Activated CD8-positive, alpha-beta memory T cell treated with anti-CD3 and anti-CD28 coated beads, Interleukin-2, amount 10 ng/mL, durations not matched to agents 7 days and 5 days (primary cell): ENCODE measurements at regions of chr9 and their contacts with region 1.

Region 1: DNA sequence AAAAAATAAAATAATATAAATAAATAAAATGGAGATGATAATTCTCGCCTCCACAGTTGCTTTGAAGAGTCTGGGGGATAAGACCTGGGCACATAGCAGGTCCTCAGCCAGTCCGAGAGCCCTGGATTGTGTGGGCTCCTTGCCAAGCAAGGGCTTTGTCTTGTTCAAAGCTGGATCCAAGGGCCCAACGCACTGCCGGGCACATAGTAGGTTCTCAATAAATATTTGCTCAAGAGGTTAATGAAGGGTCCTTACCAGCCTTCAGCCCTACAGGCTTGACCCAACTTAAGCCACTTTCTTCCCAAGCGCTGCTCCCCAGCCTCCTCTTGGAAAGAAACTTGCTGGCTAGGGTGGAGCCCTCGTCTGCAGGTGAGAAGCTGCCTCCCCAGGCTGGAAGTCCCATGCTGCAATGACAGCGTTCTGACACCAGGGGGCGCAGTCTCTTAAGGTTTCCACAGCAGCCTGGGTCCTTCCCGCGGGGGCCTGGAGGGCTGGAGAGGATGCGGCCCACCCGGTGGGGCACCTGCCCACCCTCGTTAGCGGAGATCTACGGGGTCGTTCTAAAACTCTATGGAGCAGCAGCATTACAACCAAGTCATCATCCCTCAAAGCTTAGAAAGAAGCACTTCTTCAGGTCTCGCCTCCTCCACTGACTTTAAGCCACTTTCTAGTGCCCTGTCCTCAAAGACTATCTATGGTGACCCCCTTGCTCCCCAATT is 115.2 kb downstream of the LHX2 start:
- DNase-seq: peak; percentile 84
- ATAC-seq: peak; percentile 83
- H3K4me3 Mint-ChIP-seq: no peak overlapping the region
- H3K27ac Mint-ChIP-seq: no peak overlapping the region
- H3K4me1 Mint-ChIP-seq: peaks cover 3% of the 10 kb centered on the region
- H3K27me3 Mint-ChIP-seq: peaks cover 10% of the 10 kb centered on the region

Region 2: GRCh38 chr9:124098141-124099090 is 28.3 kb before region 1 on chr9:
- CTCF ChIA-PET with region 1: no interaction called
- DNase-seq: no peak
- ATAC-seq: no peak
- H3K4me3 Mint-ChIP-seq: no peak overlapping the region
- H3K27ac Mint-ChIP-seq: no peak overlapping the region
- H3K4me1 Mint-ChIP-seq: peaks cover 7% of the 10 kb centered on the region
- H3K27me3 Mint-ChIP-seq: peaks cover 16% of the 10 kb centered on the region

Region 3: DNA sequence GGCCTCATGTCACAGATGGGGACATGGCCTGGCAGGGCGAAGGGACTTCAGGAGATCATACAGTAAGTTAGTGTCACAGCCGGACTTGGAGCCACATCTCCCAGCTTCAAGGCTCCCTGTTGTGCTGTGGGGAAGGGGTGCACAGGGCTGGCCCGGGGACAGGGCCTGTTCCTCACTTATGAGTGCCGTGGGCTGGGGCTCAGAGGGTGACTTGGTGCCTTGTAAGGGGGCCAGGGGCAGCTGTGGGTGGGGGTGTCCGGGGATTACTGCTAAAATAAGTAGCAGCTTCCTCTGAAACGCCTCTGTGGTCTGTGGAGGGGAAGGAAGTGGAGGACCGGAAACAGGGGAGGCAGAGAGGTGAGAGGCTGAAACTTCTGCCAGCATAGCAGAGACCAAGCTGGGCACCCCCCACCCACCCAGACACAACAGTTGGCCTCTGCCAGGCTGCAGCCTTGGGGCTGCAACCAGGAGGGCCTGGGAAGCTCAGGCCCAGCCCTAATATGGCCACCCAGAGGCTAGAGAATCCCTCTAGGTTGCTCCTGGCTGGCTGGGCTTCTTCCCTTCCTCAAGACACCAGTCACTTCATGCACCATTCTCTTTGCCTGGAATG is 89.9 kb after region 1 on chr9:
- CTCF ChIA-PET with region 1: interaction called, 10 read pairs
- DNase-seq: peak; percentile 87
- ATAC-seq: peak; percentile 70
- H3K4me3 Mint-ChIP-seq: peak overlapping the region; percentile 49
- H3K27ac Mint-ChIP-seq: peak overlapping the region; percentile 92
- H3K4me1 Mint-ChIP-seq: peaks cover 55% of the 10 kb centered on the region
- H3K27me3 Mint-ChIP-seq: peaks cover 13% of the 10 kb centered on the region

Region 4: DNA sequence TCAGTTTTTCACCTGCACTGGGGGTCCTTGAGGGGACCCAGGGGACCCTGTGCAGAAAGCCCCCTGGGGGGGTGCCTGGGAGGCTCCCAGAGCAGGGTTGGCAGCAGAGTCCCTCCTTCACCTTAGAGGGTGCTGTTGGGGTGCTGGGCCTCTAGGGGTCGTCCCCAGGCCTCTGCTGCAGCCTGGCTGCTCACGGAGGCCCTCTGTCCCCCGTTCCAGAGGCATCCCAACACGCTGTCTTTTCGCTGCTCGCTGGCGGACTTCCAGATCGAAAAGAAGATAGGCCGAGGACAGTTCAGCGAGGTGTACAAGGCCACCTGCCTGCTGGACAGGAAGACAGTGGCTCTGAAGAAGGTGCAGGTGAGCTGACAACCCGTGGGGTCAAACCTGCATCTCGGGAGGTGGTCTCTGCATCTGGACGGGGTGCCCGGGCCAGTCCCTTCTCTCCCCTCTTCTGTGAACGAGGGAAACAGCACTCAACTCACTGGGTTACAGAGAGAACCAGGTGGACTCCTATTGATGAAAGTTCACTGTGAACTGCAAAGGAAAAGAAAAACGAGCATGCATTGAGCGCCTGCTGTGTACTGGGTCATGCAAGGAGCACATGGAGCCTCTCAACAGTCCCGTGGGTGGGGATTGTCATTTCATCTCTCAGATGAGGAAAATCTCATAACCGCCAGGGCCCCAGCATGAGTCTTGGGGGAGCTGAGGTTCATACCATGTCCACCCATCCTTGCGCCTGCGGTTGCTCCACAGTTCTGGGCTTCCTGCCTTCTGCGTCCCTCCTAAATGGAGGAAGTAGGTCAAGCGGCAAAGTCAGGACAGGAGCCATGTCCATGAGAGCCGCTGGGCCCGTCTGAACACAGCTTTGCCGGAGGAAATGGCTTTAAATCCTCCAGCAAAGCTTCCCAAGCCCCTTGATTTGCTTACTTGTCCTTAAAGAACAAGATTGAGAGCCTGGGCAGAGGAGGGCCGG is 185.8 kb after region 1 on chr9:
- CTCF ChIA-PET with region 1: interaction called, 13 read pairs
- DNase-seq: no peak
- ATAC-seq: no peak
- H3K4me3 Mint-ChIP-seq: no peak overlapping the region
- H3K27ac Mint-ChIP-seq: no peak overlapping the region
- H3K4me1 Mint-ChIP-seq: no peaks in the 10 kb centered on the region
- H3K27me3 Mint-ChIP-seq: no peaks in the 10 kb centered on the region

Region 5: DNA sequence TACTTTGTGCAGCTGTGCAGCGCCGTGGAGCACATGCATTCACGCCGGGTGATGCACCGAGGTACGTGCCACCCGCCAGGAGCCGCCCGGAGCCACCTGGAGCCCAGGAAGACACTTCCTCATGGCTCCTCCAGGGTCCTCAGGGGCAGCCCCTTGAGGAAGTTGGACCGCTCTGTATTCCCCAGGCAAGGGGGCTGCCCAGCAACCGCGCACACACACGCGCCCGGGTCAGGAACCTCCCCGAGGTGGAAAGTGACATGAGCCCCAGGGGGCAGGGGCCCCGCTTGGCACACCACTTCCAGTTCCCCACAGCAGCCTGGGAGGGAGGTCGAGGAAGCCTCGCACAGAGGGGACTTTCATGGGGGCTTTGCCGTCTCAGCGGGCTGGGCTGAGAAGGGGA is 199.6 kb after region 1 on chr9:
- CTCF ChIA-PET with region 1: interaction called, 11 read pairs
- DNase-seq: no peak
- ATAC-seq: no peak
- H3K4me3 Mint-ChIP-seq: no peak overlapping the region
- H3K27ac Mint-ChIP-seq: no peak overlapping the region
- H3K4me1 Mint-ChIP-seq: peaks cover 3% of the 10 kb centered on the region
- H3K27me3 Mint-ChIP-seq: no peaks in the 10 kb centered on the region

Region 6: GRCh38 chr9:124392871-124393460 is 266.2 kb after region 1 on chr9:
- CTCF ChIA-PET with region 1: interaction called, 19 read pairs
- DNase-seq: no peak
- ATAC-seq: no peak
- H3K4me3 Mint-ChIP-seq: no peak overlapping the region
- H3K27ac Mint-ChIP-seq: no peak overlapping the region
- H3K4me1 Mint-ChIP-seq: peaks cover 38% of the 10 kb centered on the region
- H3K27me3 Mint-ChIP-seq: no peaks in the 10 kb centered on the region